GM10248 (cell line): ENCODE measurements at regions of chr1 and their contacts with region 1.

Region 1: DNA sequence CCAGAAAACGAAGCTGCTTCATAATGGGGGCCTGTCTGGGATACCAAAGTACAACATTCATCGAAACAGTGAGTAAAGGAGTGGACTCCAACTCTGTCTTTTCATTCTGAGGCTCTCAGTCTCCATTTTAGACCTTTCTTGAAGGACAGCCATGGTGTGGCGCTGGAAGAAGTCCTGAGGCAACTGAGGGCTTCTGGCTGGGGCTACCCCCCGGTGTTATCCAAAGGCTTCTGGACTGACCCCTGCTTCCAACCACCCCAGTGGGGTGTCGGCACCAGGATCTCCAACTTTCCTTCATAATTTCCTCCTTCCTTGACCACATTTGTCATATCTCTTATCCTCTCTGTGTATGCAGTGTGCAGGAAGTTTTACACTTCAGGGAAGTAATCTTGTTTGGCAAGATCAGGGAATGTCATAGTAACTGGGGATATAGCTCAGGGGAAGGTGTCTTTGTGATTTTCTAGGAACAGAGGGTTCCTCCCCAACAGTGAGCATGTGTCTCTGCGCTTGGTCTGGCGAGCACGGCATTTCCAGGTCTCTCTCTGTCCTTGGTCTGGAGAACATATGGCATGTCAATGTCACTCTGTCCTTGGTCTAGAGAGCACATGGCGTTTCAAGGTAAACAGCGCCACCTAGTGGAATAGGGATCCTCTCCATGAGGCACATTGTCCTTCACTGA is 19.4 kb upstream of the BSDC1 start:
- DNase-seq: peak; percentile 51
- CTCF ChIP-seq: peak; percentile 70

Region 2: DNA sequence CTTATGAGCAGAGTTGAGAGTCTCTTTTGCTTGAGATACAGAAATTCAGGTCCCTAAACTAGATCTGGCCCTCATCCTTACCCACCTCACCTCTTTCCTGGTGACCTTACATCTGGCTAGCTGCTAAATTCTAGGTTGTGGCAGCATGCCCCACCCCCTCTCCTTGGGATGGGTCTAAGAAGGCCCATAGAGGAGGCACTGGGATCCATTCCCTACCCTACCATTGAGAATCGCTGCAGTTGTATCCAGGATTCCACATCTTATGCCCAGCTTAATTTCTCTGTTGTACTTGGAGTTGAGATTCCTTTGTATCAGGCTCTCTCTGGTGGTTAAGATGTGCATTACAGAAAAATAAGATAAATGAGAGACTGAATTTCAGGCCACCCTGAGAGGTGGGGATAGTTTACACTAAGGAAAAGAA is 350.4 kb before region 1 on chr1:
- CTCF ChIA-PET with region 1: no interaction called
- POLR2A ChIA-PET with region 1: no interaction called
- DNase-seq: peak; percentile 43
- CTCF ChIP-seq: peak; percentile 61

Region 3: DNA sequence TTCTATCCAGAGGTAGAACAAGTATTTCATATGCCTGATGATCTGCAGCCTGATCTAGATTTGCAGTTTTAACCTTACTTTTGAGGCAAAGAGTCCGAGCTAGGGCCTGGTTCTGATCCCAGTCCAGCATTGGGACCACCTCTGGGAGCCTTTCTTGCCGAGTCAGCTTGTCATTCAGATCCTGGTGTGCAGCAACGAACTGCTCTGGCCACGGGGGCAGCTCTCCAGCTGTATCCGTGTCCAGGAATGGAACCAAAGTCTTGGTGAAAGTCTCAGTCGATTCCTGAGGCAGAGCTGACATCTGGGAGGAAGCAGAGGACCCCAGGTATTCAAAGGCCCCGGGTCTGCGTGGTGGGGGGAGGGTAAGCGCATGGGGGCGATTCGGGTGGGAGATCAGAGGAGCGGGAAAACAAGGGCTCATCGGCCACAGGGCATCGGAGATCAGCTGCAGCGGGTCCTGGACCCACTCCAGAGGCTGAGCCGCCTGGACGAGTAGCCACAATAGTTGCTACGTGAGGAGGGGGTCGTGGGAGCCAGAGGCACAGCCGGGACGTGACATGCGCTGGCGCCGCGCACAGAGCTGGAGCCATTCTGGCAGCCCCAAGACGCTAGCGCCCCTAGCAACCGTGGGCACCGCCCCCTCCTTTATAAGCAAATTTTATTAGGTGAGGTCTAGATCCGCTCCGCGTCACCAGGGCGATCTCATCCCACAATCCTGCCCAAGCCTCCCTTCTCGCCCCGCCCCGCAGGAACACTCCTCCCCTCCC is 13.0 kb after region 1 on chr1:
- CTCF ChIA-PET with region 1: interaction called, 31 read pairs
- POLR2A ChIA-PET with region 1: no interaction called
- DNase-seq: no peak
- CTCF ChIP-seq: no peak